Lower leg skin (tissue), 4 donors: ENCODE measurements at regions of chr15 and their contacts with region 1.

Region 1: GRCh38 chr15:43293402-43293801 is 26.7 kb upstream of the TGM5 start:
- DNase-seq: no peak
- H3K4me3 ChIP-seq: no peak overlapping the region
- CTCF ChIP-seq: no peak
- POLR2A ChIP-seq: no peak

Region 2: DNA sequence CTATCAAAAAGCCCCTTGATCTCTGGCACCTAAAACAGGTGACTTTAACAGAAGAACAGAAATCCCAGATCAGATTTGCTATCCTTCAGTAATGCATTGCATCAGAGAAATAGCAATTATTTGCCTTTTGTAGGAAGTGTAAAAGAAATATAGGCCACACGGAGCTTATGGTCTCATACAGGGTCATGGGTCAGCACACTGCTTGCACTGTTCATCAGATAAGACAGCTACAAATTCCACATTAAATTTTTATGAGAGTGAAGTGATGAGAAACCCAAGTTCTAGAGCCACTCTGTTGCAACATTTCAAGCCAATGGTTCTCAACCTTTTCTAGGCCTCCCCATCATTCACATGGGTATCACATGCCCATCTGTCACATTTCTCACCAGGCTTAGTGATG is 986.7 kb before region 1 on chr15:
- intact Hi-C with region 1: loop called (anchors 5 kb)
- DNase-seq: no peak
- H3K4me3 ChIP-seq: no peak overlapping the region
- CTCF ChIP-seq: no peak
- POLR2A ChIP-seq: no peak